ENCODE measurements at regions of chr22 and their contacts with region 1.

Region 1: GRCh38 chr22:20591660-20592310 is 84.4 kb downstream of the MED15 start:
- DNase-seq: no peak
- ATAC-seq: no peak
- H3K4me3 ChIP-seq: no peak overlapping the region
- H3K4me3 Mint-ChIP-seq: no peak overlapping the region
- H3K27ac ChIP-seq: no peak overlapping the region
- H3K27ac Mint-ChIP-seq: no peak overlapping the region
- H3K4me1 ChIP-seq: no peaks in the 10 kb centered on the region
- H3K4me1 Mint-ChIP-seq: no peaks in the 10 kb centered on the region
- H3K27me3 ChIP-seq: no peaks in the 10 kb centered on the region
- H3K27me3 Mint-ChIP-seq: no peaks in the 10 kb centered on the region
- CTCF ChIP-seq: no peak

Region 2: GRCh38 chr22:20615021-20615420 is 23.2 kb after region 1 on chr22:
- CTCF ChIA-PET with region 1: no interaction called
- POLR2A ChIA-PET with region 1: no interaction called
- intact Hi-C with region 1: no loop called
- DNase-seq: no peak
- ATAC-seq: no peak
- H3K4me3 ChIP-seq: no peak overlapping the region
- H3K4me3 Mint-ChIP-seq: no peak overlapping the region
- H3K27ac ChIP-seq: no peak overlapping the region
- H3K27ac Mint-ChIP-seq: no peak overlapping the region
- H3K4me1 ChIP-seq: no peaks in the 10 kb centered on the region
- H3K4me1 Mint-ChIP-seq: no peaks in the 10 kb centered on the region
- H3K27me3 ChIP-seq: peaks cover 0 to 5% (median 0%) of the 10 kb centered on the region in 4 experiments
- H3K27me3 Mint-ChIP-seq: no peaks in the 10 kb centered on the region
- CTCF ChIP-seq: no peak

Region 3: DNA sequence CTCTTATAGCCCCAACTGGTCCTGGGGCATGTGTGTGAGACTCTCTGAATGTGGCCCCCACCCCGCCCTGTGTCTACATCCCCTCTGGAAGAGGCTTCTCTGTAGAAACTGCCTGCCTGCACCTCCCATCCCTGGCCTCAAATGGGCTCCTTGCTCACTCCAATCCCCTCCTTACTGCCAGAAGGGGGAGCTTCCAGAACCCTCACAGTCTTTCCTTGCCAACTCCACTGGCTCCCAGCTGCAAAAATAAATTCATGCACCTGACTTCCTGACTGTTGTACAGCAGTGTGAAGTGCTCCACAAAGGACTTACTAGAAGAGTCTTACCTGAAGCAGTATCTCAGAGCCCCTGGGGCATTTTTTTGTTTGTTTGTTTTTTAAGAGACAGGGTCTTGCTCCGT is 166.9 kb after region 1 on chr22:
- CTCF ChIA-PET with region 1: no interaction called
- POLR2A ChIA-PET with region 1: interaction called, 10 read pairs
- intact Hi-C with region 1: no loop called
- DNase-seq: no peak
- ATAC-seq: no peak
- H3K4me3 ChIP-seq: no peak overlapping the region
- H3K4me3 Mint-ChIP-seq: no peak overlapping the region
- H3K27ac ChIP-seq: no peak overlapping the region
- H3K27ac Mint-ChIP-seq: no peak overlapping the region
- H3K4me1 ChIP-seq: no peaks in the 10 kb centered on the region
- H3K4me1 Mint-ChIP-seq: no peaks in the 10 kb centered on the region
- H3K27me3 ChIP-seq: no peaks in the 10 kb centered on the region
- H3K27me3 Mint-ChIP-seq: no peaks in the 10 kb centered on the region
- CTCF ChIP-seq: no peak

Measured in B cell (primary cell).